ENCODE measurements at regions of chr14 and their contacts with region 1.

Region 1: GRCh38 chr14:105490572-105491366 is at the start of gene TEDC1:
- DNase-seq: peak; percentile 100
- H3K4me3 Mint-ChIP-seq: peak within 1 kb of the TSS; percentile 82
- H3K27ac Mint-ChIP-seq: peak within 1 kb of the TSS; percentile 91
- H3K4me1 Mint-ChIP-seq: peaks cover 20% of the 10 kb centered on the region
- H3K27me3 Mint-ChIP-seq: no peaks in the 10 kb centered on the region
- total RNA-seq, gene TEDC1: 40.2 to 44.8 TPM

Region 2: GRCh38 chr14:104752735-104753531 is 737.8 kb before region 1 on chr14 and contains the start of gene SIVA1:
- CTCF ChIA-PET with region 1: no interaction called
- POLR2A ChIA-PET with region 1: no interaction called
- intact Hi-C with region 1: loop called (anchors 2 kb)
- DNase-seq: peak; percentile 100
- H3K4me3 Mint-ChIP-seq: peak within 1 kb of the TSS; percentile 87
- H3K27ac Mint-ChIP-seq: peak within 1 kb of the TSS; percentile 80
- H3K4me1 Mint-ChIP-seq: peaks cover 24% of the 10 kb centered on the region
- H3K27me3 Mint-ChIP-seq: no peaks in the 10 kb centered on the region
- total RNA-seq, gene SIVA1: 97.6 to 109 TPM

Region 3: GRCh38 chr14:105050551-105050897 is 440.2 kb before region 1 on chr14:
- CTCF ChIA-PET with region 1: no interaction called
- POLR2A ChIA-PET with region 1: no interaction called
- intact Hi-C with region 1: no loop called
- DNase-seq: no peak
- H3K4me3 Mint-ChIP-seq: no peak overlapping the region
- H3K27ac Mint-ChIP-seq: no peak overlapping the region
- H3K4me1 Mint-ChIP-seq: peaks cover 6% of the 10 kb centered on the region
- H3K27me3 Mint-ChIP-seq: no peaks in the 10 kb centered on the region

Region 4: GRCh38 chr14:105300792-105301533 is 189.8 kb before region 1 on chr14 and contains the start of gene BRF1:
- CTCF ChIA-PET with region 1: interaction called, 3 read pairs
- POLR2A ChIA-PET with region 1: no interaction called
- intact Hi-C with region 1: loop called (anchors 1 kb)
- DNase-seq: peak; percentile 99
- H3K4me3 Mint-ChIP-seq: peak within 1 kb of the TSS; percentile 84
- H3K27ac Mint-ChIP-seq: peak within 1 kb of the TSS; percentile 93
- H3K4me1 Mint-ChIP-seq: peaks cover 27% of the 10 kb centered on the region
- H3K27me3 Mint-ChIP-seq: no peaks in the 10 kb centered on the region
- total RNA-seq, gene BRF1: 25.5 to 27.4 TPM

Region 5: GRCh38 chr14:105369653-105370040 is 121.1 kb before region 1 on chr14:
- CTCF ChIA-PET with region 1: interaction called, 138 read pairs
- POLR2A ChIA-PET with region 1: interaction called, 11 read pairs
- intact Hi-C with region 1: loop called (anchors 1 kb)
- DNase-seq: no peak
- H3K4me3 Mint-ChIP-seq: no peak overlapping the region
- H3K27ac Mint-ChIP-seq: no peak overlapping the region
- H3K4me1 Mint-ChIP-seq: no peaks in the 10 kb centered on the region
- H3K27me3 Mint-ChIP-seq: no peaks in the 10 kb centered on the region

Region 6: DNA sequence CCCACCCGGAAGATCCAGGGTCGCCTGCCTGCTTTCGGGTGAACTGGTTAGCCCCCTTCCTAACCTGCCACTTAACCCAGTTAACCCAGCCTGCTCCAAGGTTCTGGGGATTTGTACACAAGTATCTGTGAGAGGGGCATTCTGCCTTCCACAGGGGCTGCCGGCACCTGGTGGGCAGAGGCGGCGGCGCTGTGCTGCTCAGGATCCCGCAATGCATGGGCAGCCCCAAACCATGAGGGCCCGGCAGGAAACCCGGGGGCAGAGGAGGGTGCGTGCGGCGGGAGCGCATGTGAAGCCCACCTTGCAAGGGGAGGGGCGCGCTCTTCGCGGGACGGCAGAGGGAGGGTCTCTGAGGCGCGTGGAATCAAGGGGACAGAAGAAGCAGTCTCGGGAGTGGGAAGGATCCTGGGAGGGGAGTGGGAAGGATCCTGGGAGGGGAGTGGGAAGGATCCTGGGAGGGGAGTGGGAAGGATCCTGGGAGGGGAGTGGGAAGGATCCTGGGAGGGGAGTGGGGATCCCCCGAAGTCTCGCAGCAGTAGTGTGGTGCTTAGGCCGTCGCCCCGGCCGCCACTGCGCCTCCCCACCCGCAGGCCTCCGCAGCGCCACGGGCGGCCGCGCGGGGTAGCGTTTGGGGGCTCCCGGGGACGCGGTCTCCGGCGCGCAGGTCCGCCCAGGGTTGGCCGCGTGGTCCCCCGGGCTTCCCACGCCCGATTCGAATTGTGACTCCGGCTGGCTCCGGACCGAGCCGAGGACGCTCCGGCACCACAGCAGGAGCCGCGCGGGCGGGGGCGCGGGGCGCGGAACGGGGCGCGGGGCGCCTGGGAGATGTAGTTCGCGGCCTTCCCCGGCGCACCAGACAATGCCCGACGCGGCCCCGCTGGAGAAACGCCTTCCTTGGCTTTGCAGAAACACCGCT is 76.1 kb before region 1 on chr14:
- CTCF ChIA-PET with region 1: interaction called, 8 read pairs
- POLR2A ChIA-PET with region 1: interaction called, 3 read pairs
- intact Hi-C with region 1: loop called (anchors 5 kb)
- DNase-seq: peak; percentile 73
- H3K4me3 Mint-ChIP-seq: peak overlapping the region; percentile 60
- H3K27ac Mint-ChIP-seq: no peak overlapping the region
- H3K4me1 Mint-ChIP-seq: peaks cover 12% of the 10 kb centered on the region
- H3K27me3 Mint-ChIP-seq: peaks cover 16% of the 10 kb centered on the region

Region 7: DNA sequence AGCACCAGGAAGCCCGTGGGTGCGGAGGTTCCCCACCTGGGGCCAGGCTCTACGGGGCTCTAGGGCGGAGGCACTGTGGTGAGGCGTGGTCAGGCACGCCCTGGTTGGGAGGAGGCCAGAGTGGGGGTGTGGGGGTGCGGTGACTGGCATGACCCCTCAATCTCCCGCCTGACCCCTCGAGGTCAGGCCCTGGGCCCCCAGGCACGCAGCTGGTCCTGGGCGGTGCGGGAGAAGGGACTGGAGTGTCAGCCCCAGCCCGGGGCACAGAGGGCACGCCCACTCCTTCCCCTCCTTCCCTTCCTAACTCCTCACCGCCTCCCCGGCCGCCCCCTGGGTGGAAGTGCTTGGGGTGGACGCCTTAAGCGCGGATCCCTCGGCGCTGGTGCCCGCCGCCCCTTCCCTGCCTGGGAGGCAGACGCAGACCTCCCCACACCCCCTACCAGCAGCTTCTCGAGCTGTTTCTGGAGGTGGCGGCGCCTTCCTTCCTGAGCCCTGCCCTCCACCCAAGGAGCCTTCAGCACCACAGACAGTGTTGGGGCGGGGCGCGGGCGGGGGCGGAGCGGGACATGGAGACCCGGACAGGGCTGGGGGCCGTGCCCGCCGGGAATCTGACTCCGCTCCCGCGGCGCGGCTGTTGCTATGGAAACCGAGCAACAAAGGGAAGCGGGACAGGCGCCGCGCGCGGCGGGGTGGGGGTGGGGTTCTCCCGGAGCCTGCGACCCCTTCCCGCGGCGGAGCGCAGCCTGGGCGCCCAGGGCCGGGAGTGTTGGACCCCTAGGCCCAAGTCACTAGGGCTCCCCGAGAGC is 16.9 kb before region 1 on chr14:
- CTCF ChIA-PET with region 1: interaction called, 23 read pairs
- POLR2A ChIA-PET with region 1: interaction called, 10 read pairs
- intact Hi-C with region 1: loop called (anchors 2 kb)
- DNase-seq: peak; percentile 79
- H3K4me3 Mint-ChIP-seq: peak overlapping the region; percentile 23
- H3K27ac Mint-ChIP-seq: no peak overlapping the region
- H3K4me1 Mint-ChIP-seq: peaks cover 8% of the 10 kb centered on the region
- H3K27me3 Mint-ChIP-seq: peaks cover 5% of the 10 kb centered on the region

Region 8: DNA sequence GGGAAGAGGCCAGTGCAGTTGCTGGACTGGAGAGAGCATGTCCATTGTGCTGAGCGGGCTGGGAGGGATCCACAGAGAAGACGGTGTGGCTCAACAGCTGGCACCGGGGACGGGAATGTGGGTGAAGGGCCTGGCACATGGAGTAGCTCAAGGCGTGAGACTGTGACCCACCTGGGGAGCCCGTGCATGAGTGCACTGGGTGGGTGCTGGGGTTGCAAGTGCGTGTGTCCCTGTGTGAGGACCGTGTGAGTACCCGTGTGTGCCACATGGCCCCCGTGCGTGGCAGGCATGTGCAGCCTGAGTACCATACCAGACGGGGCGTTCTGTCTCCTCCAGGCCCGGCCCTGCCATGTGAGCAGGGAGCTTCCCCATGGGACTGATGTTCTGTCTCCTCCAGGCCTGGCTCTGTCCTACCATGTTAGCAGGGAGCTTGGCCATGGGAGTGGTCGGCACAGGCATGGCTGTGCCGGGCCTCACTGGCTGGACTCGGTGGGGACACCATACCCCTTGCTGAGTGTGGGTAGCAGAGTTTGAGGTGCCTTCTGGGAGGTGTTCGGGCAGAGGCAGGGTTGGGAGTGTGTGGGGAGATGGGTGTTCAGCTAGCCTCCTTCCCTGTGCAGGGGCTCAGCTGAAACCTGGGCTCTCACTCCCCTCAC is 270.1 kb after region 1 on chr14:
- CTCF ChIA-PET with region 1: no interaction called
- POLR2A ChIA-PET with region 1: no interaction called
- intact Hi-C with region 1: no loop called
- DNase-seq: no peak
- H3K4me3 Mint-ChIP-seq: no peak overlapping the region
- H3K27ac Mint-ChIP-seq: no peak overlapping the region
- H3K4me1 Mint-ChIP-seq: no peaks in the 10 kb centered on the region
- H3K27me3 Mint-ChIP-seq: peaks cover 9% of the 10 kb centered on the region

Measured in activated CD4-positive, alpha-beta memory T cell treated with anti-CD3 and anti-CD28 coated beads for 36 hours (primary cell).